ENCODE measurements at regions of chr21 and their contacts with region 1.

Region 1: DNA sequence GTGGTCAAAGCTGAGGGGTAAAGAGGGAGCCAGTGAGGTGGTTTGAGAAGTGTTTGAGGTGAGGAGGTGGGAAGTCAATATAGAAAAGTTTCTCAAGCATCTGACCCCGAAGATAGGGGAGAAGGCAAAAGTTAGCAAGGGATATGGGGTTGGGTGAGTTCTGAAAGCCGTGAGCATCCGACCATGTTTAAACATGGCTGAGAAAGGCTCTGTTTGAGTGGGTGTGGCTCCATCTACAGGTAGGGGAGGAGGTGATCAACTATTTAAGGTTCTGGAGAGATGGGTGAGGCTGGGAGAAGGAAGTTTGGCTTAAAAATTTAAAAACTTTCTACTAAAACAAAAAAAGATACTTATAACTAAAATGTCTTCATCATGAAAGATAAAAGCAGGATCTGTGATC is 273.8 kb downstream of the KCNJ6 start:
- DNase-seq: no peak
- H3K4me3 ChIP-seq: no peak overlapping the region
- H3K27ac ChIP-seq: no peak overlapping the region
- H3K4me1 ChIP-seq: peaks cover 38% of the 10 kb centered on the region
- H3K27me3 ChIP-seq: no peaks in the 10 kb centered on the region
- CTCF ChIP-seq: no peak
- POLR2A ChIP-seq: no peak

Region 2: GRCh38 chr21:36756527-36756926 is 886.0 kb before region 1 on chr21:
- CTCF ChIA-PET with region 1: no interaction called
- POLR2A ChIA-PET with region 1: no interaction called
- dilution Hi-C with region 1: no loop called
- intact Hi-C with region 1: no loop called
- DNase-seq: peak; percentile 50
- H3K4me3 ChIP-seq: no peak overlapping the region
- H3K27ac ChIP-seq: no peak overlapping the region
- H3K4me1 ChIP-seq: peaks cover 13% of the 10 kb centered on the region
- H3K27me3 ChIP-seq: no peaks in the 10 kb centered on the region
- CTCF ChIP-seq: no peak
- POLR2A ChIP-seq: no peak

Region 3: DNA sequence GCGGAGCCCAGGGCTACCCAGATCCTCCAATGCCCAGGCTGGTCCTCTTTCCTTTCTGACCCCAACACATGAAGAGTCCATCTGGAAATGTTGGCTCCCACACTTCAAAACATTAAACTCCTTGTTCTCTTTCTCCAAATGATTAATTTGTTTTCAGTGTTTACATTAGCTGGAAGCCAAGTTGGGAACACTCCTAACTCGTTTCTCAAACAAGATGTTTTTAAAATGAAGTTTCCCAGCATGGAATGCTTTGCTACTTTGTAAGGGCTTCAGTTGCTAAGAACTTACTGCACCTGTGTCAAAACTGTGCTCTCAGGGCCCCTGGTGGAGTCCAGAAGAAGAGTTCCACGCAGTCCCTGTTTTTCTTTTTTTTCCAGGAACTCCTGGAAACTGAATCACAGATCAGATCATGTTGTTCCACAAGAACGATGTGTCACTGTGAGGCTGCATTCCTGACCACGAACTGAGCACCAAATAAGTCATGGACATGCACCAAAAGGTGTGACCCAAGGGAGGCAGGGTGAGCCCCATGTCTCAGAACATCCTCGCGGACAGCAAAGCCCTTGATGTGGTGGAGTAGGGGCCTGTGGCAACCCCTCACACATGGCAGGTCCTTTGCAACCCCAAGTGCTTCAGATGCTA is 16.4 kb after region 1 on chr21:
- CTCF ChIA-PET with region 1: interaction called, 3 read pairs
- POLR2A ChIA-PET with region 1: no interaction called
- dilution Hi-C with region 1: no loop called
- intact Hi-C with region 1: loop called (anchors 1 kb)
- DNase-seq: peak; percentile 95
- H3K4me3 ChIP-seq: no peak overlapping the region
- H3K27ac ChIP-seq: peak overlapping the region; percentile 72
- H3K4me1 ChIP-seq: peaks cover 22% of the 10 kb centered on the region
- H3K27me3 ChIP-seq: no peaks in the 10 kb centered on the region
- CTCF ChIP-seq: peak; percentile 51 to 62
- POLR2A ChIP-seq: no peak

Region 4: GRCh38 chr21:37686991-37687810 is 44.7 kb after region 1 on chr21:
- CTCF ChIA-PET with region 1: no interaction called
- POLR2A ChIA-PET with region 1: no interaction called
- dilution Hi-C with region 1: no loop called
- intact Hi-C with region 1: no loop called
- DNase-seq: no peak
- H3K4me3 ChIP-seq: no peak overlapping the region
- H3K27ac ChIP-seq: no peak overlapping the region
- H3K4me1 ChIP-seq: no peaks in the 10 kb centered on the region
- H3K27me3 ChIP-seq: peaks cover 8 to 14% of the 10 kb centered on the region in 2 experiments
- CTCF ChIP-seq: no peak
- POLR2A ChIP-seq: no peak